IMR-90 (cell line): ENCODE measurements at regions of chr11 and their contacts with region 1.

Region 1: GRCh38 chr11:66408488-66409214 is 12.2 kb upstream of the NPAS4 start:
- DNase-seq: peak; percentile 93
- ATAC-seq: peak; percentile 96
- H3K4me3 ChIP-seq: peak overlapping the region; percentile 26
- H3K27ac ChIP-seq: peak overlapping the region; percentile 6; the same call in 1 of the 2 replicates
- H3K4me1 ChIP-seq: peaks cover 3% of the 10 kb centered on the region
- H3K27me3 ChIP-seq: peaks cover 13% of the 10 kb centered on the region
- CTCF ChIP-seq: peak; percentile 100
- POLR2A ChIP-seq: peak; percentile 57
- RAD21 ChIP-seq: peak; percentile 100

Region 2: GRCh38 chr11:66277471-66278362 is 130.9 kb before region 1 on chr11 and contains the start of gene CNIH2:
- CTCF ChIA-PET with region 1: no interaction called
- POLR2A ChIA-PET with region 1: no interaction called
- dilution Hi-C with region 1: no loop called
- in situ Hi-C with region 1: no loop called
- intact Hi-C with region 1: no loop called
- DNase-seq: no peak
- ATAC-seq: peak; percentile 71
- H3K4me3 ChIP-seq: peak within 1 kb of the TSS; percentile 38
- H3K27ac ChIP-seq: no peak within 1 kb of the TSS; the same call in 1 of the 2 replicates
- H3K4me1 ChIP-seq: peaks cover 5% of the 10 kb centered on the region; the same call in 1 of the 2 replicates
- H3K27me3 ChIP-seq: no peaks in the 10 kb centered on the region; the same call in 1 of the 2 replicates
- CTCF ChIP-seq: no peak
- POLR2A ChIP-seq: no peak
- RAD21 ChIP-seq: no peak
- total RNA-seq, gene CNIH2: 0.54 and 0.83 TPM in 2 replicates

Region 3: DNA sequence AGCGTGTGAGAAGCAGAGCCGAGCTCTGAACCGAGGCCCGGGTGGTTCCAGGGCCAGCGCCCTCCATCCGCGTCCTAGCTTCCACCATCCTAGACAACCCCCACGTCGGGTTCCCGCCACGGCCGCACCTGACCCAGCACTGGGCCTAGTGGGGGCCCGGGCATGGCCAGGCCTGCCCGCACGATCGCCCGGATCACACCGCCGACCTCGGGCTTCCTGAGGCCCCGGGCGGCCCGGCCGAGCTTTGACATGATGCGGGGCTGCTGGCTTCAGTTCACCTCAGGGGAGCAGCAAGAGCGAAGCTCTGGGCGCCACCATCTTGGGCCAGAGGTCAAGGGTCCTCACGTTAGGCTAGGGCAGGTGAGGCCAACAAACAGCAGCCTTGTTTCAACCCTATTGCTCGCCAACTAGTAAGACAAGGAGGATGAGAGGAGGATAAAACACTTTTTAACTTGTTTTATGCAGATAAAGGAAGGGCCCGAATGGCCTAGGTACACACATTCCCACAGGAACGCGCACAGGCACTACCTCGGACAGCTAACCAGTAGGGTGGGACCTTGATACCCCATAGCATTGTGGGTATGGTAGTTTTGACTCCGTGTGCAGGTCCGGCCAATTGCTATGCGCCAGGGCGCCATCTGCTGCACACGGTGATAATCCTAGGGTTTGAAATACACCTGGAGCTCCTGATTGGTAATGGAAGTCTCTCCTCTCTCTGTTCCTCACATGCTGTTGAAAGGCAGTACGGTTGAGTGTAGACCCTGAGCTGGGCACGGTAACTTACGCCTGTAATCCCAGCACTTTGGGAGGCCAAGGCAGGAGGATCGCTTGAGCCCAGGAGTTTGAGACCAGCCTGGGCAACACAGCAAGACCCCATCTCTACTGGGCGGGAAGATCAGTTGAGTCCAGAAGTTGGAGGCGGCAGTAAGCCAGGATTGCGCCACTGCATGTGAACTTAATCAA is 30.1 kb after region 1 on chr11 and contains the start of gene MRPL11:
- CTCF ChIA-PET with region 1: interaction called, 8 read pairs
- POLR2A ChIA-PET with region 1: no interaction called
- dilution Hi-C with region 1: no loop called
- in situ Hi-C with region 1: no loop called
- intact Hi-C with region 1: loop called (anchors 2 kb)
- DNase-seq: peak; percentile 93
- ATAC-seq: peak; percentile 99
- H3K4me3 ChIP-seq: peak within 1 kb of the TSS; percentile 77
- H3K27ac ChIP-seq: peak within 1 kb of the TSS; percentile 81
- H3K4me1 ChIP-seq: peaks cover 8% of the 10 kb centered on the region
- H3K27me3 ChIP-seq: no peaks in the 10 kb centered on the region
- CTCF ChIP-seq: peak; percentile 87
- POLR2A ChIP-seq: no peak
- RAD21 ChIP-seq: peak; percentile 55
- total RNA-seq, gene MRPL11: 39.2 and 45.5 TPM in 2 replicates

Region 4: GRCh38 chr11:66510271-66510989 is 101.8 kb after region 1 on chr11 and contains the start of gene BBS1:
- CTCF ChIA-PET with region 1: no interaction called
- POLR2A ChIA-PET with region 1: no interaction called
- dilution Hi-C with region 1: no loop called
- in situ Hi-C with region 1: no loop called
- intact Hi-C with region 1: loop called (anchors 1 kb)
- DNase-seq: peak; percentile 68
- ATAC-seq: peak; percentile 100
- H3K4me3 ChIP-seq: peak within 1 kb of the TSS; percentile 91
- H3K27ac ChIP-seq: peak within 1 kb of the TSS; percentile 52
- H3K4me1 ChIP-seq: no peaks in the 10 kb centered on the region
- H3K27me3 ChIP-seq: no peaks in the 10 kb centered on the region
- CTCF ChIP-seq: no peak
- POLR2A ChIP-seq: no peak; the same call in 1 of the 2 replicates
- RAD21 ChIP-seq: 0 out of 2 replicates have a peak, but pooled peaks have one; percentile 1
- total RNA-seq, gene BBS1: 13.9 and 16.5 TPM in 2 replicates

Region 5: DNA sequence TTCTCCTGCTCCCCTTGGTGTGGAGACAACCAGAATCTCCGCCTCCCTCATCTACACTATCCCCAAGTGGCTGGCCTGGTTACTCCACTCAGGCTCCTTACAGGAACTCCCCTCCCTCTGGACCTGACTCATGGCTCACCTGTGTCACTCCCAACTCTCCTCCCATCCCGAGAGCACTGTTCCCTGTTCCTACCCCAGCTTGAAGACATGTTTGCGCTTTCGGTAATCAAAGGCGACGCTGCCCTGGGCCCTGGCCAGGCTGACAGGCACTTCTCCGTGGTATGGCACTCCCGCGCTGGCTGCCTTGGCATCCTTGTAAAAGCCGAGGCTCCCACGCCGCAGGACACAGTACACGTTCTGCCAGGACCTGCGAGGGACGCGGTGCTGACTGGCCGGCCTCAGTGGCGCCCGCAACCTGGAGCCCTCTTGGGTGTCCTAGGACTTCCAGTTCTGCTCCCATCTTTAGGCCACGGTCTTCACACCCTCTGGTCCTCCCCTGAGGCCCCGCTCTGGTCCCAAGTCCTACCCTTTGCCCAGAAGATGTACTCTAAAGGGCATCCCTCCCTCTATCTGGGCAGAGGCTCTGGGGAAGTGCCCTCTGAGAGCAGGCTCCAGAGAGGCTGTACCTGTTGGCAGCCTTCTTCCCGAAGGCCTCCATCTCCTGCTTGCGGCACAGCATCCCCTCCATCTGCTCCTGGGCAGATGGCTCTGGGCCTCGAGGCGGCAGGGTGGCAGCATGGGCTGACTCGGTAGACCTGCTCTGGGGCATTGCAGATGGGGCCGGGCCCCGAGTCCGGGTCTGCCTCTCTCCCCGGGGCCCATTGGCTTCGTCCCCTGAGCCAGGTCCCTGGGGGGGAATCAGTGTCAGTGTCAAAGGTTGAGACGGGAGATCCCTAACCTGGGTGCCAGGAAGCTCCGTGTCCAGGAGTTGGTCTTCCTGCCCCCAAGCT is 278.4 kb after region 1 on chr11:
- CTCF ChIA-PET with region 1: no interaction called
- POLR2A ChIA-PET with region 1: no interaction called
- dilution Hi-C with region 1: no loop called
- in situ Hi-C with region 1: loop called (anchors 10 kb)
- intact Hi-C with region 1: no loop called
- DNase-seq: no peak
- ATAC-seq: no peak
- H3K4me3 ChIP-seq: no peak overlapping the region
- H3K27ac ChIP-seq: no peak overlapping the region
- H3K4me1 ChIP-seq: no peaks in the 10 kb centered on the region
- H3K27me3 ChIP-seq: no peaks in the 10 kb centered on the region; the same call in 1 of the 2 replicates
- CTCF ChIP-seq: no peak
- POLR2A ChIP-seq: no peak
- RAD21 ChIP-seq: no peak

Region 6: DNA sequence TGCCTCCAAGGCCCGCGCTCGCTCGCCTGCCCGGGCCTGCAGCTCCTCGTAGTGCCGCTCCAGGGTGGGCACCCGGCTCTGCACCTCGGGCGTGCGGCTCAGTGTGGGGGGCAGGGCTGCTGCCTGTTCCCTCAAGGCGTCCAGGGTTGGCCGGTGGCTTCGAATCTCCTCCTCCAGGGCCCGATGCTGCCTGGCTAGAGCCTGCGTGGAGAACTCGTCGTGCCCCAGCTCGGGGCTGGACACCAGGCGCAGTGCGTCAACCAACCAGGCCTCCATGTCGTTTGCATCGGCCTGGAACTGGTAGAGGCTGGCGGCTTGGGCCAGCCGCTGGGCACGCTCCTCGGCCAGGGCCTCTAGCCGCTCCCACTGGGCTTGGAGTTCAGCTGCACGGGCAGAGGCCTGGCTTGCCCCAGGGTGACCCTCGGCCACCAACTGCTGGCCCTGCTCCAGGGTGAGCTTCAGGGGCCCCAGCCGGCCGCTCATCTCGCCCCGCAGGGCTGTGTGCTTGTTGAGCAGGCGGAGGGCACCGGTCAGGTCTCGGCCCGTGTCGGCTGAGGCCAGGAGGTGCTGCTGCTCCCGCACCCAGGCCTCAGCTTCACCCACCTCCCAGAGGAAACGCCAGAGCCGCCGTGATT is 296.2 kb after region 1 on chr11:
- CTCF ChIA-PET with region 1: no interaction called
- POLR2A ChIA-PET with region 1: no interaction called
- dilution Hi-C with region 1: no loop called
- in situ Hi-C with region 1: no loop called
- intact Hi-C with region 1: no loop called
- DNase-seq: no peak
- ATAC-seq: no peak
- H3K4me3 ChIP-seq: no peak overlapping the region
- H3K27ac ChIP-seq: no peak overlapping the region
- H3K4me1 ChIP-seq: no peaks in the 10 kb centered on the region
- H3K27me3 ChIP-seq: no peaks in the 10 kb centered on the region
- CTCF ChIP-seq: no peak
- POLR2A ChIP-seq: no peak
- RAD21 ChIP-seq: no peak

Region 7: GRCh38 chr11:66835768-66836405 is 427.2 kb after region 1 on chr11:
- CTCF ChIA-PET with region 1: no interaction called
- POLR2A ChIA-PET with region 1: no interaction called
- dilution Hi-C with region 1: no loop called
- in situ Hi-C with region 1: no loop called
- intact Hi-C with region 1: loop called (anchors 1 kb)
- DNase-seq: peak; percentile 65
- ATAC-seq: peak; percentile 79
- H3K4me3 ChIP-seq: no peak overlapping the region
- H3K27ac ChIP-seq: peak overlapping the region; percentile 71; the same call in 1 of the 2 replicates
- H3K4me1 ChIP-seq: peaks cover 6% of the 10 kb centered on the region
- H3K27me3 ChIP-seq: no peaks in the 10 kb centered on the region
- CTCF ChIP-seq: no peak
- POLR2A ChIP-seq: no peak
- RAD21 ChIP-seq: no peak